Activated B cell treated with CpG ODN at 0.5 μM for 24 hours (primary cell): ENCODE measurements at regions of chr4 and their contacts with region 1.

Region 1: DNA sequence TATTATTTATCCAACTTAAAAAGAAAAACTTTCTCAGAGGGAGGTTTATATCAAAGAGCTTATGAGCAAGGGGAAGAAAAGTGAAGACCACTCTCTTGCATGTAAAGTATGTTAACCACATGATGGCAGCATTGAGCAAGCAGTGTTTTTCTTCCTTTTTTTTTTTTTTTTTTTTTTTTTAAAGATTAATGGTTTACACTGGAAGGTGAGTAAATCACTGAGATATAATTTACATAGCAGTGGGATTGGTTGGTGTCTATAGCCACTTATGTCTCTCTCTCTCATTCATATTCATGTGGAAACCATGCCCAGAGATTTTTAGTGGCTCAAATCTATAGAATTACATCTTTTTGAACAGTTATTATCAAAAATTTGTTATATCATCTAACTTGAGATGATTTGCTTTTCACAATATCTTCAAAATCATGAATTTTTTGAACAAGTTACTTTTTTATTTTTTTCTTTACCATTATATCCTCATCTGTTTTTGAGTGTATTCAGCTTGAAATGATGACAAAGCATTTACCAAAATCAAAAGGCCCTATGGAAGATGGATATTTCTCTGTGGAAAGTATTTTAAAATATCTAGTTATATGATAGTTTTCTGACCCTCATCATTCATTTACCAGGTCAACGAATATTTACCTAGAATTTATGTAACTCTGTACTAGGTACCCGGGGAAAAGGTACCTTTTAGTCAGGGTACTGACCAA is 31.6 kb downstream of the MTHFD2L start:
- DNase-seq: no peak
- ATAC-seq: peak; percentile 56
- H3K4me3 Mint-ChIP-seq: no peak overlapping the region
- H3K27ac Mint-ChIP-seq: no peak overlapping the region
- H3K4me1 Mint-ChIP-seq: no peaks in the 10 kb centered on the region
- H3K27me3 Mint-ChIP-seq: no peaks in the 10 kb centered on the region
- CTCF ChIP-seq: no peak

Region 2: GRCh38 chr4:74146581-74147129 is 42.8 kb before region 1 on chr4:
- CTCF ChIA-PET with region 1: no interaction called
- POLR2A ChIA-PET with region 1: no interaction called
- intact Hi-C with region 1: no loop called
- DNase-seq: no peak
- ATAC-seq: no peak
- H3K4me3 Mint-ChIP-seq: no peak overlapping the region
- H3K27ac Mint-ChIP-seq: no peak overlapping the region
- H3K4me1 Mint-ChIP-seq: no peaks in the 10 kb centered on the region
- H3K27me3 Mint-ChIP-seq: peaks cover 32% of the 10 kb centered on the region
- CTCF ChIP-seq: no peak

Region 3: DNA sequence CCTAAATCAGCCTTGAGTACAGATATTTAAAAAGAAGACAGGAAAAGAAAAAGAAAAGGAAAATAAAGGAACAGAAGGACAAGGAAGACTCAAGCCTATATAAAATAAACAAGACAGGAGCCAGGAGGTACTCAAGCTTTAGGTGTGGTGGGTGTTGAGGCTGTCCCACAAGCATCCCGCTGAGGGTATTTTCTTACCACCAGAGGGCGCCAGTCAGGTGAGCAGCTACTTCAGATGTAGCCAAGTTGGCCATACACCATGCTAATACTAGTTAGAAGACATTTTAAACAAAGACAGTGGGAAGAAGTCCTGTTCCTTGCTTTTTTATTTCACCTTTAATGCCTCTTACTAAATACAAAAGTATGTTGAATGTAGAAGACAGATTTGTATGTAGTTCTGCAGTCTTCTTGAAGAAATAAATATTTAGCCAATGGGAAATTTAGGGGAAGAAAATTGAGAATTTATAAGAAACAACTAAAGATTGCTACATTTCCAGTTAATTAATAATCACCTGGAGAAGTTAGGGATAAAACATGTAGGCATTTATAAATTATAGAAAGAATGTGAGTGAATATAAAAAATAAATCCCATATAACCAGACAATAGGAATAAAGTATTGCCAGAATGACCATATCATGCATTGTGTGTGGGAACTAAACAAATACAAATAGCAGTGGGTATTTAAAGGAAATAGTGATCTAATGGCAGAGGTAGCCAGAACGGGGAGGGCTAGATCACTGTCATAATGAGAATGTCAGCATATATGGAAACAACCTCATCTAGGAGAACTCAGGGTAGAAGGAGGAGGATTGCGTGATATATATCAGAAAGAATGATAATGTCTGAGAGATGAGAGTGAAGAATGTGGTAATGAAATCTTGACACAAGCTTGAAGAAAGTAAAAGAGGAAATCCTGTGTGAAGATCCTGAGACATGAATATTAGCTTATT is 39.5 kb after region 1 on chr4:
- CTCF ChIA-PET with region 1: interaction called, 16 read pairs
- POLR2A ChIA-PET with region 1: no interaction called
- intact Hi-C with region 1: loop called (anchors 1 kb)
- DNase-seq: peak; percentile 36
- ATAC-seq: peak; percentile 78
- H3K4me3 Mint-ChIP-seq: no peak overlapping the region
- H3K27ac Mint-ChIP-seq: no peak overlapping the region
- H3K4me1 Mint-ChIP-seq: no peaks in the 10 kb centered on the region
- H3K27me3 Mint-ChIP-seq: no peaks in the 10 kb centered on the region
- CTCF ChIP-seq: peak; percentile 60

Region 4: DNA sequence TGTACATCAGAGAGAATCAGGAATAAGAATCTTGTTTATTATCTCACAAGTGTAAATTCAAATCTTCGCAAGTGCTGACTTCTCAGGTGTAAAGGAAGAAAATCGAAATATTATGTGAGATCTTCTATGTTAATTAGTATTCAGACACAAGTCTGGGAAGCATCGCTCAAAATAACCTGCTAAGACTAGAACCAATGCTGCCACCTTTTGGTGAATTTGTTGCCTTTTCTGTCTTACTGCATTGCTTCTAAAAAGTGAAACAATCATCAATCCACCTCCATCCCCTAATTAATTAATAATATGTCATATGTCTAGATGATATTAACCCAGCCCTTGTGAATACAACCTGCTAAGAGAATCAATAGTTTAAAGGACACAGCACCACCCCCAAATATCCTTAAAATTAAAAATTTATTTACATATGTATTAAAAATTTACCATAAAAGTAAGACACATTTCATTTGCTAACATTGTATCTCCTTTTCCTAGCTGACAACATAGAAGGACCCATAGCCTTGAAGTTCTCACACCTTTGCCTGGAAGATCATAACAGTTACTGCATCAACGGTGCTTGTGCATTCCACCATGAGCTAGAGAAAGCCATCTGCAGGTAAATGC is 122.3 kb after region 1 on chr4:
- CTCF ChIA-PET with region 1: interaction called, 14 read pairs
- POLR2A ChIA-PET with region 1: no interaction called
- intact Hi-C with region 1: loop called (anchors 1 kb)
- DNase-seq: no peak
- ATAC-seq: peak; percentile 40
- H3K4me3 Mint-ChIP-seq: no peak overlapping the region
- H3K27ac Mint-ChIP-seq: no peak overlapping the region
- H3K4me1 Mint-ChIP-seq: peaks cover 5% of the 10 kb centered on the region
- H3K27me3 Mint-ChIP-seq: no peaks in the 10 kb centered on the region
- CTCF ChIP-seq: no peak

Region 5: GRCh38 chr4:74376888-74377483 is 187.5 kb after region 1 on chr4:
- CTCF ChIA-PET with region 1: interaction called, 3 read pairs
- POLR2A ChIA-PET with region 1: no interaction called
- intact Hi-C with region 1: loop called (anchors 2 kb)
- DNase-seq: no peak
- ATAC-seq: peak; percentile 52
- H3K4me3 Mint-ChIP-seq: no peak overlapping the region
- H3K27ac Mint-ChIP-seq: no peak overlapping the region
- H3K4me1 Mint-ChIP-seq: no peaks in the 10 kb centered on the region
- H3K27me3 Mint-ChIP-seq: peaks cover 2% of the 10 kb centered on the region
- CTCF ChIP-seq: peak; percentile 63

Region 6: GRCh38 chr4:74623041-74623440 is 433.6 kb after region 1 on chr4:
- CTCF ChIA-PET with region 1: no interaction called
- POLR2A ChIA-PET with region 1: no interaction called
- intact Hi-C with region 1: loop called (anchors 1 kb)
- DNase-seq: no peak
- ATAC-seq: no peak
- H3K4me3 Mint-ChIP-seq: no peak overlapping the region
- H3K27ac Mint-ChIP-seq: no peak overlapping the region
- H3K4me1 Mint-ChIP-seq: no peaks in the 10 kb centered on the region
- H3K27me3 Mint-ChIP-seq: peaks cover 1% of the 10 kb centered on the region
- CTCF ChIP-seq: no peak

Region 7: DNA sequence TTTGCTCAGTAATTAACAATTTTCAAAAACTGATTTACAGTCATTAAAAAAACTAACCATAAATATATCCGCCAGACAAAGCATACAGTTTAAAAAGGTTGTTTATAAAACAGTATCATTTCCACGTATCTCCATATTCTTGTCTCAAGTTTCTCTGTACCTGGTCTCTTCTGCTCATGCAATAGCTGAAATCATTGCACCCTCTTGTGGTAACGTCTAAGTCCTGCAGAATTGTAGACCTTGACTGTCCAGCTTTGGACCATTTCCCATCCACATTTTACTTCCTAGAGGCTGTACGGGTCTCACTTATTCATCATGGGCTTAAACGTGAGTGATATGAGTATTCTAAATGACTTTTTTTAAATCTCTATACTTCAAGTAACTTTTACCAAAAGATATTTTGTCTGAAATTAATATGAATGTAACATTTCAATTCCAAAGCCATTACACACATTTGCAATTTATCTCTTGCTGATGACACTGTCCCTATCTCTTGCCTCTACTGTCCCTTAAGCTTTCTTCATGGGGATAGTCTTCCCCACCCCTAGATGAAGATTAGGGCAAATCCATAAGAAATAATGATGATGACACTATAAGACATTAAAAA is 486.3 kb after region 1 on chr4:
- CTCF ChIA-PET with region 1: interaction called, 5 read pairs
- POLR2A ChIA-PET with region 1: no interaction called
- intact Hi-C with region 1: loop called (anchors 1 kb)
- DNase-seq: no peak
- ATAC-seq: peak; percentile 65
- H3K4me3 Mint-ChIP-seq: no peak overlapping the region
- H3K27ac Mint-ChIP-seq: no peak overlapping the region
- H3K4me1 Mint-ChIP-seq: no peaks in the 10 kb centered on the region
- H3K27me3 Mint-ChIP-seq: peaks cover 9% of the 10 kb centered on the region
- CTCF ChIP-seq: no peak